Esophagus muscularis mucosa (tissue), 4 donors: ENCODE measurements at regions of chrX and their contacts with region 1.

Region 1: GRCh38 chrX:47658684-47659515 is at the start of gene UXT:
- DNase-seq: peak; percentile 98
- H3K4me3 ChIP-seq: peak within 1 kb of the TSS; percentile 59 to 75 (median 67)
- H3K27ac ChIP-seq: peak within 1 kb of the TSS; percentile 92 to 96 (median 94)
- H3K4me1 ChIP-seq: peaks cover 0 to 14% (median 4%) of the 10 kb centered on the region in 4 donors
- H3K27me3 ChIP-seq: no peaks in the 10 kb centered on the region
- CTCF ChIP-seq: no peak
- EP300 ChIP-seq: no peak
- POLR2A ChIP-seq: peak; percentile 48
- total RNA-seq, gene UXT: 75.9 to 98.0 (median 90.4) TPM

Region 2: DNA sequence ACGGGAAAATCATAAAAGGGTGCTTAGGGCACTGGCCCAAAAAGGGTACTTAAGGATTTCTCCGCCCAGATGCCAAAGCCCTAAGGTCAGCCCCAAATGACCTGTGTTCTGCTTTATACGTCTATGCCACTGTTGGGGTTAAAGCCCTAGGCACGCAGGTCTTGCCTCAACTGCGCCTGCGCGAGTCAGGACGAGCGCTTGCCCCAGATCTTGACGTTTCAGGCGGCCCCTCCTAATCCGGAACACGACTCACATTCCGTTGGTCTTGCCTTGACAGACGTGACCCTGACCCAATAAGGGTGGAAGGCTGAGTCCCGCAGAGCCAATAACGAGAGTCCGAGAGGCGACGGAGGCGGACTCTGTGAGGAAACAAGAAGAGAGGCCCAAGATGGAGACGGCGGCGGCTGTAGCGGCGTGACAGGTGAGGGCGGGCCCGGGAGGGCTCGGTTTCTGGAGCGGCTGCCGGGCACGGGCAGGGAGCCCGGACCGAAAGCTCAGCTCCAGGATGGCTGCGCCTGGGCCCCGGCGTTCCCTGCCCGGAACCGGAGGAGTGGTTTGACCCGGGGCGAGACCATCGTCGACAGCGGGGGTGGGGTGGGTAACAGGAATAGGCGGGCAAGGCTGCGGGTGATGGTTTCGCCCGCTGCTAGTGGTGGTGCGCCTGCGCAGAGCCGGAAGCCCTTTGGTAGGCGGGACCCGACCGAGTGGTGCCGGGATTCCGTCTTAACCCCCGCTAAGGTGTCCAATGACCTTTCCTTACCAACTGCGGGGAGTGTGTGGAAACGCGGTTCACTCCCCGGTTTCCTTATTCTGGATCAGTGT is 97.9 kb before region 1 on chrX and contains the start of gene ARAF:
- intact Hi-C with region 1: loop called (anchors 5 kb)
- DNase-seq: peak; percentile 98
- H3K4me3 ChIP-seq: peak within 1 kb of the TSS; percentile 63 to 83 (median 66)
- H3K27ac ChIP-seq: peak within 1 kb of the TSS; percentile 91 to 94 (median 93)
- H3K4me1 ChIP-seq: peaks cover 12 to 39% (median 35%) of the 10 kb centered on the region in 4 donors
- H3K27me3 ChIP-seq: no peaks in the 10 kb centered on the region
- CTCF ChIP-seq: no peak
- EP300 ChIP-seq: no peak
- POLR2A ChIP-seq: no peak
- total RNA-seq, gene ARAF: 39.3 to 49.6 (median 42.8) TPM

Region 3: GRCh38 chrX:47608130-47608810 is 50.6 kb before region 1 on chrX:
- intact Hi-C with region 1: no loop called
- DNase-seq: no peak
- H3K4me3 ChIP-seq: no peak overlapping the region
- H3K27ac ChIP-seq: no peak overlapping the region
- H3K4me1 ChIP-seq: no peaks in the 10 kb centered on the region
- H3K27me3 ChIP-seq: no peaks in the 10 kb centered on the region
- CTCF ChIP-seq: no peak
- EP300 ChIP-seq: no peak
- POLR2A ChIP-seq: no peak